ENCODE measurements at regions of chr3 and their contacts with region 1.

Region 1: GRCh38 chr3:47475570-47476329 is at the start of gene SCAP:
- DNase-seq: peak in 1 of 2 donors; percentile 92
- H3K4me3 ChIP-seq: peak within 1 kb of the TSS; percentile 85 to 94
- H3K27ac ChIP-seq: peak within 1 kb of the TSS; percentile 80
- H3K4me1 ChIP-seq: peaks cover 31% of the 10 kb centered on the region
- H3K27me3 ChIP-seq: no peaks in the 10 kb centered on the region
- CTCF ChIP-seq: peak; percentile 89 to 98 (median 96)
- POLR2A ChIP-seq: no peak
- total RNA-seq, gene SCAP: 84.7 TPM

Region 2: DNA sequence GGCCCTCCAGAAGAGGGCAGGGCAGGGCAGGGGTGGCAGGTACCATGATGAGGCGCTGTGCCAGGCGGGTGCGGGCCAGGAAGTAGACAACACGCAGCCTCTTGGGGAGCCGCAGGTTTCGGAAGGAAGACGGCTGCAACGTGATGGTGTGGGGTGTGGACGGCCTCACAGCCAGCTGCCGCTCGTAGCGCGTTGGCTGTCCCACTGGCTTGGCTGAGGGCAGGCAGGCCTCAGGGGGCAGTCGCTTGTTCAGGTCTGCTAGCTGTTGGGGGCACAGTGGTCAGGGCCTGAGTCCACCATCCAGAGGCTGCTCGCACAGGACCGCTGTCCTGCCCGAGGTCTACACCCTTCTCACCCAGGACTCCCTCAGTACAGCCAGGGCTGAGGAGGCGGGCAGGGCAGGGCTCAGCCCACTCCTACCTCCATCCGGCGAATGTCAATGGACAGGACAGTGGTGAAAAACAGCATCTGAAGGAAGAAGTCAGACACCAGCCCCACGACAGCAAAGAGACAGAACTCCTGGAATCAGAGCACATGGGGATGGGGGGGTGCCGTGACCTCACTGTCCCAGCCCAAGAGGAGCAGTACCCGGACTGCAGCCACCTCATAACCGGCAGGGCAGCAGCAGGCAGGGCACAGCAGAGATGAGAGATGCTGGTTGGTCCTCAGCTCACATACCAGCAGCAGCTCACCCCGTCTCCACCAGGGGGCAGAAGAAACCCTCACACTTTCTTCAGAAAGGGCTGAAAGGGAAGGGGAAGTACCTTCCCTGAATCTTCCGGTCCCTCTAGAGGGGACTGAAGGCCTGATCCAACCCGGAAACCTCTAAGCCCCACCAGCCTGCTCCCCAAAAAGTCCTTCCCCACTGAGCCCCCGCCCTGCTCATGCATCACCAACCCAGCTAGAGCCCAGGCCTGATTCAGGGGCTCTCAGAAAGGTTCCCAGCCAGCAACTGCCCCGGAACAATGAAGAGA is 55.0 kb before region 1 on chr3:
- intact Hi-C with region 1: loop called (anchors 5 kb)
- DNase-seq: no peak
- H3K4me3 ChIP-seq: no peak overlapping the region
- H3K27ac ChIP-seq: peak overlapping the region; percentile 81
- H3K4me1 ChIP-seq: peaks cover 17% of the 10 kb centered on the region
- H3K27me3 ChIP-seq: no peaks in the 10 kb centered on the region
- CTCF ChIP-seq: peak; percentile 88 to 93 (median 91)
- POLR2A ChIP-seq: no peak

Region 3: DNA sequence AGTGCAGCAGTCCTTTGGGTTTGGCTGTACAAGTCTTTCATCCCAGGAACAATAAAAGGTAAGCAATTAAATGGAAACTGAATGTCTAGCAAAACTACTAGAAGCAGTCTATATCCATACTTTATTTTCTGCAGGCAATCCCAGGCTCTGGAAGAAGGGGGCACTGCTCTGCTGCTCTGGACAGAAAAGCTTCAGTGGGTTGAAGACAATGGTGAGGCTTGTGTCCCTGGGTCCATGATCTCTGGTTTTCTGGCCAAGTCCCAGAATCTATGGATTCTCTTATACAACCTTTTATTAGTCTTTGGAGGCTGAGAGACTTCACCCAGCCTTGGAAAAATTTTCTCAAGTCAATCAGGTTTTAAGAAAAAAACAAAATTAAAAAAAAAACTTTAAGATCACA is 35.6 kb before region 1 on chr3:
- intact Hi-C with region 1: no loop called
- DNase-seq: no peak
- H3K4me3 ChIP-seq: no peak overlapping the region
- H3K27ac ChIP-seq: no peak overlapping the region
- H3K4me1 ChIP-seq: peaks cover 31% of the 10 kb centered on the region
- H3K27me3 ChIP-seq: no peaks in the 10 kb centered on the region
- CTCF ChIP-seq: no peak
- POLR2A ChIP-seq: no peak

Region 4: DNA sequence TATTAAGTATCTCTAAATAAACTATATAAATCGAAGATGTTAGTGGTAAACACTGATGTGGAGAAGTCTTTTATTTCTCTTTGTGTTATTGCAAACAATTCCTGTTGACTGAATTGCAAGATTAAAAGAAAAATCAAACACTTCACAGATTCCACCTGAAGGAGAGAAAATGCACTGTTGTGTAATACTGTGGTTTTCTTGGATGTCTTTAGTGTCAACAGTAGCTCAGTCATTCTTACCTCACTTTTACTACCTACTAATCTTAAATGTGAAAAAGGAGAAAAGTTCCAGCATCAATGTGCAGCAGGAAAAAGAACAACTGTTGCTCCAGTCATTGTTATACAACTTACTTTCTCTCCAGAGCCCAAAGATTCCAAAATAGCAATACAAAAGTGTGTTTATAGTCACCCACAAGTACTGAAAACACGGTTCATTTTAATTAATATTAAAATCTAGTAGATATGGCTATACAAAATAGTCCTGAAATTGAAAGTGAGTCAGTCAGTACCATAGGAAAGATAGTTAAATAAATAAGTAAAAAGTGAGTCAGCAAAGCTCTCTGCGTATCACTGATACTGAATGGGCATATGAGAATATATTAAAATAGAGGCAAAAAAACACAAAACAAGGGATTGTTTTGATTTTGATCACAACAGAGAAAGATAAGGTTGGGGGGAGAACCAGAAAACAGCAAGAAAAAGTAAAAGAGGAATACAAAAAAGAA is 193.4 kb after region 1 on chr3:
- intact Hi-C with region 1: no loop called
- DNase-seq: no peak
- H3K4me3 ChIP-seq: no peak overlapping the region
- H3K27ac ChIP-seq: no peak overlapping the region
- H3K4me1 ChIP-seq: no peaks in the 10 kb centered on the region
- H3K27me3 ChIP-seq: no peaks in the 10 kb centered on the region
- CTCF ChIP-seq: no peak
- POLR2A ChIP-seq: no peak